Activated CD4-positive, alpha-beta T cell treated with anti-CD3 and anti-CD28 coated beads for 36 hours (primary cell): ENCODE measurements at regions of chr11 and their contacts with region 1.

Region 1: DNA sequence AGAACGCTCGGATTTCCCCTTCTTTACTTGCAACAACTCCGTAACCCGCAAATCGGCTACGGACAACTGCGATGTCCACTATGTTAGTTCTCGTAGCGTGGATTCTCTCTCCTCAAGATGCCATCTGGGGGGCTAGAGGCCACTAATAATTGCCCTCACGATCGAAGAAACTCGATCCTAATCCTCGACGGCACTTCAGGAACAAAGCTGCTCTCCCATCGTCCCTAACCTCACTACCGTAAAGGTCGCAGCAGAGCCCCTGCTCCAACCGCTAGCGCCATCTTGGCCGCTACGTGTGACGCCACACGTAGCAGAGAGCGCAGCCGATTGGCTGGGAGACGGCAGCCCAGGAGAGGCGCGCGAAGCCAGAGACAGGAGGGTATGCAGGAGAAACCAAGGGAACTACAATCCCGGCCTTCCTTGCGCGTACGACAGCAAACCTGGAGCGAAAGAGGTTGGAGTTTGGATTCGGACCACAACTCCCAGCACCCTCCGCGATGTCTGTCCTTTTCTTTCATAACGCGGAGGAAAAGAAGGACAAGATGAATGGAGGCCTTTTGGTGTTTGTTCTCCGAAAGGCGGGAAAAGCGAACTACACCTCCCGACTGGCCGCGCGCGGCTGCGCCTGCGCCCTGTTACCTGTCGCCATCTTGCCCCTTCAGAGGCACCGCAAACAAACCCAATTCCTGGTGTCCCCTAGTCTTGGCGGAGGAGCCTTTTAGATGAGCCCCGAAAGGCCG is at the start of gene EMSY:
- DNase-seq: peak; percentile 95
- ATAC-seq: peak; percentile 94
- H3K4me3 Mint-ChIP-seq: peak within 1 kb of the TSS; percentile 96
- H3K27ac Mint-ChIP-seq: peak within 1 kb of the TSS; percentile 94
- H3K4me1 Mint-ChIP-seq: peaks cover 27% of the 10 kb centered on the region
- H3K27me3 Mint-ChIP-seq: no peaks in the 10 kb centered on the region
- total RNA-seq, gene EMSY: 28.5 to 35.4 TPM

Region 2: DNA sequence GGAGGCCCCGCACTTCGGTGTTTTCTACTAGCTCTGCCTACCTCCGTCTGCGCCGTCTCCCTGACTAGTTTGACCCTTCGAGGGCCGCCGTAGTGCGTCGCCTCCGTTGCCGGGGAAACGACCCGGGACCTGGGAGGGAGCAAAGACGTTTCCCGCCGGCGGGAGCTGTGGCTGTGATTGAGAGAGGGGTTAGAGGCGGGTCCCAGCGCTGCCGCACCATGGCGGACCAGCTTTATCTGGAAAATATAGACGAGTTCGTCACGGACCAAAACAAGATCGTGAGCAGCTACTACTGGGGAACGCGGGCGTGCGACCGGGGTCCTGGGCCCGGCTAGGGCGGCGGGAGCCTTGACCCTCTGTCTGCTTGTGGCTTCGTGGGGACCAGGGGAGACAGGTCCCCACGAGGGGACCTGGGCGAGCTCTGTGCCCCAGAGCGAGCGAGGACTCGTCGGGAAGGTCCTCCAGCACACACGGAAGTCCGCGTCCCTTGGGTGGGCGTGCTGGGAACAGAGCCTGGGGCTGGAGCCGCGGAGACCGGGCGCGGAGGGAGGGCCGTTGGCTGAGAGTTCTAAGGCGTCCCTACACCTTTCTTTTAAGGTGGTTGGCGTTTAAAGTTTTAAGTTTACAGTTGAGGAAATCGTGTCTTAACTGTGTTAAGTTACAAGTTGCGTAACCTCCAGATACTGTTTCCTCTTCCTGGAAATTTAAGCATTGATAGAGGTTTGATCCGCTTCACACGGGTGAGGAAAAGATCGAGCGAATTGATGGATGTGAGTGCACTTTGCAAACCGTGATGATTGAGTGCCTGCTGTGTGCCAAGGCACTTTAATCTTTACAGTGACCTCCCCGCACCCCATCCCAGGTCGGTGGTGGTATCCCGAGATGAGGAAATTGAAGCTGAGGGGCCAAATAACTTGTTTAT is 1851.9 kb before region 1 on chr11 and contains the start of gene POLD3:
- CTCF ChIA-PET with region 1: no interaction called
- POLR2A ChIA-PET with region 1: no interaction called
- intact Hi-C with region 1: loop called in 1 of 2 experiments (anchors 5 kb)
- DNase-seq: peak; percentile 98
- ATAC-seq: peak; percentile 96
- H3K4me3 Mint-ChIP-seq: peak within 1 kb of the TSS; percentile 93
- H3K27ac Mint-ChIP-seq: peak within 1 kb of the TSS; percentile 96
- H3K4me1 Mint-ChIP-seq: peaks cover 27% of the 10 kb centered on the region
- H3K27me3 Mint-ChIP-seq: no peaks in the 10 kb centered on the region
- total RNA-seq, gene POLD3: 70.0 to 79.8 TPM

Region 3: DNA sequence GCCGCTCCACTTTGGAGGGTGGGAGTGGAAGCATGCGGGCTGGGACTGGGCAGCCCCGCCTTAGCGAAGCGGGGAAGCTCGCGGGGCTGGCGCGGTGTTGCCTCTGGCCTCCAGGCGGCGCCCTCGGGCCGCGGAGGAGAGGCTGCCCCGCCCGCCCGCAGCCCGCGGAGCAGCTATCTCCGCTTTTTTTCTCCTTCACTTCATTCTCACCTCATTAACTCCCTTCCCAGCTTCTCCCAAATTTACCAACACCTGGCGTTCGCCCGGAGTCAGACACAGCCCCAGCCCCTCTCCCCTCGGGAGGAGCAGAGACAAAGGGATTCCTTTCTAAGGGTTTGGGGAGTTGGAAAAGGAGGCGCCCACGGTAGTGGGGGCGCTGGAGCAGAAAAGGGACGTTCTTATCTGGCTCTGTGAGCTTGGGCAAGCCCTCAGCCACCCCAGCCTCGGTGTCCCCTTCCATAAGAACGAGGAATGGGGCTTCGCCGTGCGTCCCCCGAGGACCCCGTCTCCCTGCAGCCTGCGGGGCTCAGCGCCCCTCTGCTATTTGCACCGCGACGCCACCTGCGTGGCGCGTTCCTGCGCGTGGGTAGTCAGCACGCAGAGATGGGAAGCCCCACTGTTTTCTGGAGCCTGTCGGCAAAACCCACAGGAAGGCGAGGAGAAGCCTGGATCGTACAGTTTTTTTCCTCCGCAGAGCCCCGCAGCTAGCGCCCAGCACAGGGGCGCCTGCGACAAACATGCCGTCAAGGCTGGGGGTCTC is 236.7 kb before region 1 on chr11:
- CTCF ChIA-PET with region 1: interaction called, 5 read pairs
- POLR2A ChIA-PET with region 1: interaction called, 3 read pairs
- intact Hi-C with region 1: loop called in 1 of 2 experiments (anchors 2 kb)
- DNase-seq: peak; percentile 87
- ATAC-seq: peak; percentile 76
- H3K4me3 Mint-ChIP-seq: peak overlapping the region; percentile 60
- H3K27ac Mint-ChIP-seq: no peak overlapping the region
- H3K4me1 Mint-ChIP-seq: peaks cover 15% of the 10 kb centered on the region
- H3K27me3 Mint-ChIP-seq: peaks cover 55% of the 10 kb centered on the region

Region 4: GRCh38 chr11:76782526-76783293 is 338.2 kb after region 1 on chr11:
- CTCF ChIA-PET with region 1: no interaction called
- POLR2A ChIA-PET with region 1: no interaction called
- intact Hi-C with region 1: loop called in 1 of 2 experiments (anchors 10 kb)
- DNase-seq: peak; percentile 91
- ATAC-seq: peak; percentile 89
- H3K4me3 Mint-ChIP-seq: peak overlapping the region; percentile 69
- H3K27ac Mint-ChIP-seq: peak overlapping the region; percentile 96
- H3K4me1 Mint-ChIP-seq: peaks cover 15% of the 10 kb centered on the region
- H3K27me3 Mint-ChIP-seq: peaks cover 41% of the 10 kb centered on the region

Region 5: GRCh38 chr11:77066229-77067042 is 621.9 kb after region 1 on chr11 and contains the start of gene CAPN5:
- CTCF ChIA-PET with region 1: no interaction called
- POLR2A ChIA-PET with region 1: no interaction called
- intact Hi-C with region 1: loop called in 1 of 2 experiments (anchors 2 kb)
- DNase-seq: peak; percentile 91
- ATAC-seq: peak; percentile 97
- H3K4me3 Mint-ChIP-seq: peak within 1 kb of the TSS; percentile 75
- H3K27ac Mint-ChIP-seq: peak within 1 kb of the TSS; percentile 78
- H3K4me1 Mint-ChIP-seq: peaks cover 4% of the 10 kb centered on the region
- H3K27me3 Mint-ChIP-seq: no peaks in the 10 kb centered on the region
- total RNA-seq, gene CAPN5: 0.62 to 0.76 TPM

Region 6: DNA sequence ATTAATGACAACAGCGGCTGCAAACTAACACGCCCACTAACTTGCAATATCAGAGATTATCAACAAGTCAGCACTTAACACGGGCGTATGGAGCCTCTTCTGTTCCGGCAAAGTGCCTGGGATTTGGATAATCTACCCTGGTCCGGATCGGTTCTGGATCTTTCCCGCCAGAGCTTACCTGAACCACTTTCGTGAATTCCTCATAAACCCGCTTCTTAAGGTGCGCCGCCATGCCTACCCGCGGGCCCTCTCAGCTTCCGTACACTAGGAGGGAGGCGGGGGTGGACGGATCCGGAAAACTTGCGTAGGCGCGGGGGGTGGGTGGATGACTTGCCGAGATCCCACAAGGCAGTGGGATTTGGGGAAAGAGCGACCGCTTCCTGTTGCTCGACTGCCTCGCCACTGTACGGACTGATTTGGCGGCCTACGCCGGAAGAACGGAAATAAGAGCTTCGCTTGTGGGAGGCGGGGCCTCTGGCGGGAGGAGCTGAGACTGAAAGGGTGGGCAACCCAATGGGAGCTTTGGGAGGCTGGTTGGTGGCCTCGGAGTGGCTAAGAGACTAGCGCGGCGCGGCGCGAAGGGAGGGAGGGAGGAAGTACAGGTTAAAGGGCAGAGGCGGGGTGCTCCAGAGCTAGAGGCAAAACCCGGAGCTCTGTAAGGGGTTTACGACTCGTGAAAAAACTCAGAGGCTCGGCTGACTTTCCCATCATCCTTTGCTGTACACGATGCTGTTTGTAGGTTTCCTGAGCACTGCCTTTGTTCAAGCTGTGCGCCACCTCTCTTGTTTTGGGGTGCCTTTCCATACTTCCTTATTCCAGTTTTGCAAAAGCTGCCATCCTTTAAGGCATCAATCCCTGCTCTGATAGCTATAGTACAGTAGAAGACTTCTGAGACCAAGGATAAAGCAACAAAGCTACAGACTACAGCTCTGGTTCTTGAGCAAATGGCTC is 1550.1 kb after region 1 on chr11 and contains the start of gene INTS4:
- CTCF ChIA-PET with region 1: no interaction called
- POLR2A ChIA-PET with region 1: no interaction called
- intact Hi-C with region 1: loop called in 1 of 2 experiments (anchors 5 kb)
- DNase-seq: peak; percentile 99
- ATAC-seq: peak; percentile 99
- H3K4me3 Mint-ChIP-seq: peak within 1 kb of the TSS; percentile 86
- H3K27ac Mint-ChIP-seq: peak within 1 kb of the TSS; percentile 97
- H3K4me1 Mint-ChIP-seq: peaks cover 29% of the 10 kb centered on the region
- H3K27me3 Mint-ChIP-seq: no peaks in the 10 kb centered on the region
- total RNA-seq, gene INTS4: 53.8 to 55.4 TPM